Gastrocnemius medialis (tissue), 4 donors: ENCODE measurements at regions of chr13 and their contacts with region 1.

Region 1: DNA sequence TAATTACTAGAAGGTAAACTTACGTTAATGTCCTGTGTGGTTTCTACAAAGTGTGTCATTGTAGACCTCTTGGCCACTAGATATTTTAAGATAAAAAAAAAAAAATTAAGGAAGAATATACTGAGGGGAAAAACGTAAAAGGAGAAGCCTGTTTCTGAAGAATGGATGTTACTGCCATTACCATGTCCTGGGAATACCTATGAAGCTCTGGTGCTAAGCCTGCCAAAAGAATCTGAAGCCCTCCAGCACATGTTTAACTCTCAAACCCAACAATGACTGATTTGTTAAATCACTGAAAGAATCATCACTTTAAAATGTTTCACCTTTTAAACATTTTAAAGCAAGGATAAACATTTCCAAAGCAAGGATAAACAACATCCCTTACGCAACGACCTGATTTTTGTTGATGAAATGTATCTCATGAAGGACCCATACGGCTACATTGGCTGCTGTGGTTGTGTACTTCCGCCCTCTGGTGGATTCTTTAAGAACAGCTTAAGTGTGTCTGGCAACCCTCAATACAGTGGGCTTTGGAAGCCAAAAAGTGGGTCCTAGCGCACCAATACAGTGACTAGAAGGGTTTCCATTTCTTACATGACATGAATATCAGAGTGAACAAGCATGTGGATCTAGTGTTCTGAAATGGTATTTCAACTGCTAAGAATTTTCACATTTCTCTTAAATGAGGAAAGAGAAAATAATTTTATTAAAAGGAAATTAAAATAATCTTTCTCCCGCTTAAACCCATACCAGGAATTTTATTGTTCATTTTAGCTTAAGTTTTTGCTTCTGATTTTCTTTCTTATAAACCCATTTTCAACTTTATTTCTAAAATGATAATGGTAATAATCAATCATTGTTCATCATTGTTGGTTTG is 74.5 kb upstream of the RAP2A start:
- DNase-seq: peak in 1 of 2 donors; percentile 54
- ATAC-seq: peak; percentile 95 to 96
- H3K4me3 ChIP-seq: no peak overlapping the region
- H3K27ac ChIP-seq: peak overlapping the region; percentile 32 to 67 (median 56)
- H3K4me1 ChIP-seq: peaks cover 18 to 24% of the 10 kb centered on the region in 2 donors
- H3K27me3 ChIP-seq: no peaks in the 10 kb centered on the region
- CTCF ChIP-seq: peak; percentile 80 to 85 (median 83)
- POLR2A ChIP-seq: no peak

Region 2: GRCh38 chr13:97018029-97018831 is 341.2 kb before region 1 on chr13:
- in situ Hi-C with region 1: no loop called
- intact Hi-C with region 1: loop called (anchors 5 kb)
- DNase-seq: no peak
- ATAC-seq: peak; percentile 45 to 65
- H3K4me3 ChIP-seq: no peak overlapping the region
- H3K27ac ChIP-seq: no peak overlapping the region
- H3K4me1 ChIP-seq: no peaks in the 10 kb centered on the region
- H3K27me3 ChIP-seq: no peaks in the 10 kb centered on the region
- CTCF ChIP-seq: peak; percentile 56 to 84 (median 63)
- POLR2A ChIP-seq: no peak

Region 3: GRCh38 chr13:97109841-97110492 is 249.5 kb before region 1 on chr13:
- in situ Hi-C with region 1: loop called in 1 of 4 experiments (anchors 10 kb)
- intact Hi-C with region 1: loop called (anchors 2 kb)
- DNase-seq: peak; percentile 72 to 82
- ATAC-seq: peak; percentile 95 to 96
- H3K4me3 ChIP-seq: peak overlapping the region in 3 of 4 donors; percentile 21 to 42 (median 25)
- H3K27ac ChIP-seq: peak overlapping the region in 3 of 4 donors; percentile 50 to 63 (median 58)
- H3K4me1 ChIP-seq: peaks cover 3 to 18% of the 10 kb centered on the region in 2 donors
- H3K27me3 ChIP-seq: no peaks in the 10 kb centered on the region
- CTCF ChIP-seq: peak; percentile 94 to 100 (median 97)
- POLR2A ChIP-seq: no peak

Region 4: GRCh38 chr13:97212601-97213040 is 146.8 kb before region 1 on chr13:
- in situ Hi-C with region 1: loop called in 2 of 4 experiments (anchors 5 to 10 kb)
- intact Hi-C with region 1: no loop called
- DNase-seq: no peak
- ATAC-seq: peak; percentile 60 to 69
- H3K4me3 ChIP-seq: no peak overlapping the region
- H3K27ac ChIP-seq: no peak overlapping the region
- H3K4me1 ChIP-seq: no peaks in the 10 kb centered on the region
- H3K27me3 ChIP-seq: no peaks in the 10 kb centered on the region
- CTCF ChIP-seq: peak; percentile 42 to 65 (median 53)
- POLR2A ChIP-seq: no peak